ENCODE measurements at regions of chr21 and their contacts with region 1.

Region 1: GRCh38 chr21:33542640-33543504 is at the start of gene SON:
- DNase-seq: peak; percentile 95 to 99
- ATAC-seq: peak; percentile 85 to 97 (median 88)
- H3K4me3 ChIP-seq: peak within 1 kb of the TSS; percentile 92
- H3K4me3 Mint-ChIP-seq: peak within 1 kb of the TSS; percentile 99
- H3K27ac ChIP-seq: peak within 1 kb of the TSS; percentile 99
- H3K27ac Mint-ChIP-seq: peak within 1 kb of the TSS; percentile 98 to 100
- H3K4me1 ChIP-seq: peaks cover 6% of the 10 kb centered on the region
- H3K4me1 Mint-ChIP-seq: peaks cover 47 to 53% of the 10 kb centered on the region in 2 donors
- H3K27me3 ChIP-seq: no peaks in the 10 kb centered on the region
- H3K27me3 Mint-ChIP-seq: no peaks in the 10 kb centered on the region
- CTCF ChIP-seq: no peak
- total RNA-seq, gene SON: 348 to 442 (median 416) TPM

Region 2: DNA sequence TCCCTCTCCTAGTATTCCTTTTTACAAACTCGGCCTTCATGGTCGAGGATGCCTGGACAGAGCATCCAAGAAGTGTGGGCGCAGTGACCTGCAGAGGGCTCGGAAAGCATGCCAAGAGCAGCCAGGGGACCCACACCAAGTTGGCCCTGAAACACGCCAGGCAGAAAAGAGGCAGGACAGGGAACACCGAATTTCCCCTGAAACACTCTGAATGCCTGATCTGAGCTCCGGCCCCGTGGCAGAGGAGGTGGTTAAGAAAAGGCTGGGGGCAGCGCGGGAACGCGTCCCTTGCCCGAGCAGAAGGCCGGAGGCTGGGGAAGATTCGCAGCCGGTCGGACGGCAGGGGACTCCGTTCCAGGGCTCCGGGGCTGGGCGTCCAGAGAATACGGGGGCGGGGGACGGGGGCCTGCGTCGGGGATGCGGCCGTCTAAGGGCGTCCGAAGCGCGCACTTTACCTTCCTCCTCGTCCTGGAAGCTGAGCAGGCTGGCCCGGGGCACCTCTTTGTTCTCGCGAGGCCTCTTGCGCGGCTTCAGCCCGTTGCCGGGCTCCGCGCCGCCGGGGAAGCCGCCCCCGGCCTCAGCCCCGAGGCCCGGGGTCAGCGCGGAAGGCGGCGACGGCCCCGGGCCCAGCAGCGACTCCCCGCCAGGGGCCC is 771.9 kb before region 1 on chr21:
- intact Hi-C with region 1: loop called (anchors 5 kb)
- DNase-seq: no peak
- ATAC-seq: peak; percentile 41 to 57 (median 43)
- H3K4me3 ChIP-seq: peak overlapping the region; percentile 77
- H3K4me3 Mint-ChIP-seq: peak overlapping the region; percentile 96
- H3K27ac ChIP-seq: peak overlapping the region; percentile 75
- H3K27ac Mint-ChIP-seq: peak overlapping the region; percentile 98 to 99
- H3K4me1 ChIP-seq: peaks cover 9% of the 10 kb centered on the region
- H3K4me1 Mint-ChIP-seq: peaks cover 62 to 63% of the 10 kb centered on the region in 2 donors
- H3K27me3 ChIP-seq: no peaks in the 10 kb centered on the region
- H3K27me3 Mint-ChIP-seq: peaks cover 3 to 8% of the 10 kb centered on the region in 2 donors
- CTCF ChIP-seq: no peak

Region 3: DNA sequence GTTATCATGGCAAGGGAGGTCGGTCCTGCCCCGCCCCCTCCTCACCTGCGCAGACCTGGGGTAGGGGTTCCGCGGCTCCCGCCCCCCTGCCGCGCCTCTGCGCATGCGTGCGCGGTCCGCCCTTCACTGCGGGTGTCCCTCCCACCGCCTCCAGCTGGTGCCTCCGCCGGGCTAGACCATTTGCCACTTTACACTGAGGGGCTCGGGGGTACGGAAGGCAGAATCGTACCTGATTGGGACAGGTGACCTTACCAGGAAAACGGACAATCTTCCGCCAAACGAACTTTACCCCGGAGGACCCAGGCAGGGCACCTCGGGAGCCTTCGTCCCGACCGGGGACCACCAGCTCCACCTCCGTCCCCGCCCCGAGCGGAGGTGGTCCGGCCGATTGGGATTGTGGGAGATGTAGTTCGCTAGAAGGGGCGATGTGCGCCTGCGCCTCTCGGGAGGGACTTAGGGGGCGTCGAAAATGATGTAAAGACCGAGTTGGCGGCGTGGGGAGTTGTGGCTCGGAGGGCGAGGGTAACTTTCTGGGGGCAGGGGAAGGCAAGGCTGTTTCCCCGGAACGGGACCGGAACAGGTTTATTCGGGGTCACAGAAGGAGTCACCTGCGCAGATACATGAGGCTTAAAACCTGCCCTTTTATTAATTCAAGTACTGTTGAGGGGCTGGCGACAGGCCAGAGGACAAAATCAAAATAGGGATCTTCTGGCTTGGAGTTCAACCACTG is 51.3 kb before region 1 on chr21 and contains the start of gene DNAJC28:
- intact Hi-C with region 1: loop called (anchors 1 kb)
- DNase-seq: peak; percentile 94 to 97
- ATAC-seq: peak; percentile 98
- H3K4me3 ChIP-seq: peak within 1 kb of the TSS; percentile 78
- H3K4me3 Mint-ChIP-seq: peak within 1 kb of the TSS; percentile 89
- H3K27ac ChIP-seq: peak within 1 kb of the TSS; percentile 34
- H3K27ac Mint-ChIP-seq: peak within 1 kb of the TSS; percentile 82 to 86
- H3K4me1 ChIP-seq: peaks cover 8% of the 10 kb centered on the region
- H3K4me1 Mint-ChIP-seq: peaks cover 14% of the 10 kb centered on the region in 2 donors
- H3K27me3 ChIP-seq: no peaks in the 10 kb centered on the region
- H3K27me3 Mint-ChIP-seq: peaks cover 7 to 10% of the 10 kb centered on the region in 2 donors
- CTCF ChIP-seq: no peak
- total RNA-seq, gene DNAJC28: 0.41 to 0.63 TPM in 2 of 3 donors, not detected in the other

Region 4: DNA sequence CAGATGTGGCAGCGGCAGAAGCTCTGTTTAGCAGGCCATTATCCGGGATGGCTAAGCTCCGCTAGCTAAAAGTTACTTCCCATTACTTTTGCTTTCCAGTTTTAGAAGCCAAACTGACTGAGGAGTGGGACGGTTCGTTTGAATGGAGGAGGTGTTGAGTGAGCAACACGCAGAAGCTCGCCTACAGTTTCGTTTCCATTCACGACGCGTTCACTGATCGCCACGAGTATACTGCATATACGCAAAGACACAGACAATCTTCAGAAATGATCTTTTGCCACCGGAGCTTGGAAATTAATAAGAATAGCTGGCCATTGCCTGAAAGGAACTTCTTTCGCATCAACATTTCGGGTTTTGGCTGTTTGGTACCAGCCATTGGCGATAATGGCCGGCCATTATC is 14.6 kb after region 1 on chr21:
- intact Hi-C with region 1: loop called (anchors 2 kb)
- DNase-seq: no peak
- ATAC-seq: no peak
- H3K4me3 ChIP-seq: no peak overlapping the region
- H3K4me3 Mint-ChIP-seq: no peak overlapping the region
- H3K27ac ChIP-seq: no peak overlapping the region
- H3K27ac Mint-ChIP-seq: peak overlapping the region in 1 of 2 donors; percentile 0
- H3K4me1 ChIP-seq: peaks cover 4% of the 10 kb centered on the region
- H3K4me1 Mint-ChIP-seq: peaks cover 51 to 63% of the 10 kb centered on the region in 2 donors
- H3K27me3 ChIP-seq: no peaks in the 10 kb centered on the region
- H3K27me3 Mint-ChIP-seq: no peaks in the 10 kb centered on the region
- CTCF ChIP-seq: no peak

Region 5: DNA sequence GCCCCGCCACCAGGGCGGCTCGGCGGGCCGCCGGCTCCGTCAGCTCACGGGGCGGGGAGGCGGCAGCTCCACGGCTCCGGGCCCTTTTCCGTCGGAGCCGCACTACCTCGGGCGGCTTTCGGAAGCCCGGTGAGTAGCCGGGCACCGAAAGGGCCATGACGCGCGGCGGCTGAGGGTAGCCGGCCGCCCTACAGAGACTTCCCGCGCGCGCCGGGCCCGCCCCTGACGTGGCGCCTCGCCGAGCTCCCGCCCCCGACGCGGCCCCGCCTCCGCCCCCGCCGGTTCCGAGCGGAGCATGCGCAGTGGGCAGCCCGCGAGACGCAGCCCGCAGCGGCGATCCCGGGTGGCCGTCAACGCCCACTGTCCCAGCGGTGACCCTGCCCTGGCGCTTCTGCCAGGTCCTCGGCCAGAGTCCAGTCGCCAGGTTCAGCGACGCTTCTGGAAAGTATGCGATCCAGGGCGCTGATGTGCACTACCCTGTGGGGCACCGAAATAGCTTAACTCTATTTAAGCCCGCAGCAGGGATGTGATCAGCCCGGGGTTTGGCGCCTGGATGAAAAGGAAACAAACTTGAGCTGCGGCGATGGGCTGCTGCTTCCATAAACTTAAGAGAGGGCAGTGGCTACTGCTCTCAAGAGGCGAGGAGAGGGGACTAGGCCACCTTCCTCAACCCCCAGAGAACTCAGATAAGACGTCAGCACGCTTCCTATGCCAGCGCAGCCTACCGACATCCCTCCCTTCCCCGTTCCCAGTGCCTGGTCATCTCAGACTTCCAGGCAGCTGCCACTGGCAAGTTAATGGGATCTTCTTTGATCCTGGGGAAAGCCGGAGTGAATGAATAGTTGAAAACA is 45.8 kb after region 1 on chr21 and contains the start of gene DONSON:
- intact Hi-C with region 1: loop called (anchors 5 kb)
- DNase-seq: peak; percentile 92 to 93
- ATAC-seq: peak; percentile 94 to 98 (median 95)
- H3K4me3 ChIP-seq: peak within 1 kb of the TSS; percentile 76
- H3K4me3 Mint-ChIP-seq: peak within 1 kb of the TSS; percentile 92
- H3K27ac ChIP-seq: peak within 1 kb of the TSS; percentile 64
- H3K27ac Mint-ChIP-seq: peak within 1 kb of the TSS; percentile 75 to 87
- H3K4me1 ChIP-seq: peaks cover 10% of the 10 kb centered on the region
- H3K4me1 Mint-ChIP-seq: peaks cover 15 to 17% of the 10 kb centered on the region in 2 donors
- H3K27me3 ChIP-seq: no peaks in the 10 kb centered on the region
- H3K27me3 Mint-ChIP-seq: no peaks in the 10 kb centered on the region
- CTCF ChIP-seq: peak; percentile 22
- total RNA-seq, gene DONSON: 17.0 to 18.3 (median 17.3) TPM

Region 6: DNA sequence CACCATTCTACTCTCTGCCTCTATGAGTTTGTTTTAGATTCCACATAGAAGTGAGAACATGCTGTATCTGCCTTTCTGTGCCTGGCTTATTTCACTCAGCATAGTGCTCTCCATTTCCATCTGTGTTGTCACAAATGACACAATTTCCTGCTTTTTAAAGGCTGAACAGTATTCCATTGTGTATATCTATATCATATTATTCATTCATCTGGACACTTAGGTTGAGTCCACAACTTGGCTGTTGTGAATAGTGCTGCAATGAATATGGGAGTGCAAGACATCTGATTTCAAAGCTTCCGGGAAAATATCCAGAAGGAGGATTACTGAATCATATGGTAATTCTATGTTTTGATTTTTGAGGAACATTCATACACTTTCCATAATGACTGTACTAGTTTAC is 65.7 kb after region 1 on chr21:
- intact Hi-C with region 1: loop called (anchors 5 kb)
- DNase-seq: no peak
- ATAC-seq: no peak
- H3K4me3 ChIP-seq: no peak overlapping the region
- H3K4me3 Mint-ChIP-seq: no peak overlapping the region
- H3K27ac ChIP-seq: no peak overlapping the region
- H3K27ac Mint-ChIP-seq: no peak overlapping the region
- H3K4me1 ChIP-seq: no peaks in the 10 kb centered on the region
- H3K4me1 Mint-ChIP-seq: peaks cover 0 to 5% of the 10 kb centered on the region in 2 donors
- H3K27me3 ChIP-seq: no peaks in the 10 kb centered on the region
- H3K27me3 Mint-ChIP-seq: no peaks in the 10 kb centered on the region
- CTCF ChIP-seq: no peak

Region 7: GRCh38 chr21:33641336-33642026 is 98.6 kb after region 1 on chr21 and contains the start of gene CRYZL1:
- intact Hi-C with region 1: loop called (anchors 2 kb)
- DNase-seq: peak; percentile 100
- ATAC-seq: peak; percentile 78 to 92 (median 81)
- H3K4me3 ChIP-seq: peak within 1 kb of the TSS; percentile 71
- H3K4me3 Mint-ChIP-seq: peak within 1 kb of the TSS; percentile 88
- H3K27ac ChIP-seq: peak within 1 kb of the TSS; percentile 83
- H3K27ac Mint-ChIP-seq: peak within 1 kb of the TSS; percentile 86 to 90
- H3K4me1 ChIP-seq: peaks cover 16% of the 10 kb centered on the region
- H3K4me1 Mint-ChIP-seq: peaks cover 29% of the 10 kb centered on the region in 2 donors
- H3K27me3 ChIP-seq: peaks cover 7% of the 10 kb centered on the region
- H3K27me3 Mint-ChIP-seq: peaks cover 17 to 23% of the 10 kb centered on the region in 2 donors
- CTCF ChIP-seq: no peak
- total RNA-seq, gene CRYZL1: 25.8 to 32.8 (median 30.0) TPM

Measured in natural killer cell (primary cell).